ENCODE measurements at regions of chr6 and their contacts with region 1.

Region 1: GRCh38 chr6:136792410-136793262 is at the start of gene MAP3K5:
- DNase-seq: peak; percentile 95
- H3K4me3 Mint-ChIP-seq: peak within 1 kb of the TSS; percentile 93
- H3K27ac Mint-ChIP-seq: peak within 1 kb of the TSS; percentile 91
- H3K4me1 Mint-ChIP-seq: peaks cover 31% of the 10 kb centered on the region
- H3K27me3 Mint-ChIP-seq: peaks cover 3% of the 10 kb centered on the region
- total RNA-seq, gene MAP3K5: 25.4 to 25.9 TPM

Region 2: GRCh38 chr6:136593748-136594490 is 198.7 kb before region 1 on chr6:
- CTCF ChIA-PET with region 1: interaction called, 23 read pairs
- POLR2A ChIA-PET with region 1: interaction called, 28 read pairs
- DNase-seq: peak; percentile 68
- H3K4me3 Mint-ChIP-seq: peak overlapping the region; percentile 63
- H3K27ac Mint-ChIP-seq: peak overlapping the region; percentile 88
- H3K4me1 Mint-ChIP-seq: peaks cover 30% of the 10 kb centered on the region
- H3K27me3 Mint-ChIP-seq: no peaks in the 10 kb centered on the region

Region 3: DNA sequence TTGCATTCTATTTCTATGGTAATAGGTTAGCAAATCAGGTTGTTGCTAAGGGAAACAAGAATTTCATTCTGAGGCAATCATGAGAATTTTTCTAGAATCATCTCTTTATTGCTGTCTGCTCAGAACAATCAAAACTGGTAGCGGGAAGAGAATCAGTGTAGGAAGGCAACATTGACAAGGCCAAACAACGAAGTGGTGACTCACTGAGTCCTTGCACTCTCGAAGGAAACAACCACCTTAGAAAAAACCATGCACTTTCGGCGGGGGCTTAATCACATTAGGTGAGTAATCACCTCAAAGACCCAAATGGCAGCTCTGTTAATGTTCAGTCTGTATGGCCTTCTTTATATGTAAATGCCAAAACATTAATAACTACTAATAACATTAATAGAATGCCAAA is 163.6 kb before region 1 on chr6:
- CTCF ChIA-PET with region 1: interaction called, 11 read pairs
- POLR2A ChIA-PET with region 1: interaction called, 8 read pairs
- DNase-seq: no peak
- H3K4me3 Mint-ChIP-seq: no peak overlapping the region
- H3K27ac Mint-ChIP-seq: no peak overlapping the region
- H3K4me1 Mint-ChIP-seq: peaks cover 11% of the 10 kb centered on the region
- H3K27me3 Mint-ChIP-seq: no peaks in the 10 kb centered on the region

Region 4: GRCh38 chr6:136677831-136678230 is 114.8 kb before region 1 on chr6:
- CTCF ChIA-PET with region 1: interaction called, 13 read pairs
- POLR2A ChIA-PET with region 1: no interaction called
- DNase-seq: no peak
- H3K4me3 Mint-ChIP-seq: no peak overlapping the region
- H3K27ac Mint-ChIP-seq: no peak overlapping the region
- H3K4me1 Mint-ChIP-seq: no peaks in the 10 kb centered on the region
- H3K27me3 Mint-ChIP-seq: no peaks in the 10 kb centered on the region

Region 5: DNA sequence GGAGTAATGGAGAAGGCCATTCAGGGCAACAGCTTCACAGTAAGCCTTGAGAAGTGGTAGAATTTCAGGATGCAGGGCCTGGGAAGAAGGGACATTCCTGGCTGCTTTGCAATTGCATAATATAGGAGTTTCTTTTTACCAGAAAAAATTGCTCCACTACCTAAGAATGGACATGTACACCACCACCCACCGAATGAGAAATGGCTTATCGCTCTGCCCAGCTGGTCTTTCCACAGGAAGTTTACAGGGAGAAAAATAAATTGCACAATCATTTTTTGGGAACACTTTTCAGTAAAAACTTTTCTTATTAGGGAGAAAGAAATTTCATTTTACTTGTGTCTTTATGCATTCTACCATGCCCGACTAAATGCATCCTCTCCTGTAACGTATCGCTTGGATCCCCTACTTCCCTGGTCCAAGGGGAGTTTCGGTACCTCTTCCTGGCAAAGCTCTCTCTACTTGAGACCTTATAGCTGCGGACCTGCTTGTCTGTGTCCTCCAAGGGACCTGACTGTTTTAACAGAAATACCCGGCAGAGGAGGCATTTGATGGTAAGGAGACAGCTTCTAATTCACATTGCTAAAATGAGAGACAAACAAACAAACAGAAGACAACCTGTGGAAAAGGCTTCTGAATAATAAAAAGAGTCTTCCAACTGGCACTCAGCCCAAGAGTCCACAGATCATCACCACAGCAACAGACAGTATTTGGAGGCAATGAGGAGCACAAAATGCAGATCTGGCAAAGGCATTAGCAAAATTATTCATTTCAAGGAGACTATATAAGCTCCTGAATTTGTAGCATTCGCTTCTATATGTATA is 54.6 kb before region 1 on chr6:
- CTCF ChIA-PET with region 1: interaction called, 15 read pairs
- POLR2A ChIA-PET with region 1: interaction called, 24 read pairs
- DNase-seq: no peak
- H3K4me3 Mint-ChIP-seq: no peak overlapping the region
- H3K27ac Mint-ChIP-seq: no peak overlapping the region
- H3K4me1 Mint-ChIP-seq: peaks cover 18% of the 10 kb centered on the region
- H3K27me3 Mint-ChIP-seq: no peaks in the 10 kb centered on the region

Region 6: DNA sequence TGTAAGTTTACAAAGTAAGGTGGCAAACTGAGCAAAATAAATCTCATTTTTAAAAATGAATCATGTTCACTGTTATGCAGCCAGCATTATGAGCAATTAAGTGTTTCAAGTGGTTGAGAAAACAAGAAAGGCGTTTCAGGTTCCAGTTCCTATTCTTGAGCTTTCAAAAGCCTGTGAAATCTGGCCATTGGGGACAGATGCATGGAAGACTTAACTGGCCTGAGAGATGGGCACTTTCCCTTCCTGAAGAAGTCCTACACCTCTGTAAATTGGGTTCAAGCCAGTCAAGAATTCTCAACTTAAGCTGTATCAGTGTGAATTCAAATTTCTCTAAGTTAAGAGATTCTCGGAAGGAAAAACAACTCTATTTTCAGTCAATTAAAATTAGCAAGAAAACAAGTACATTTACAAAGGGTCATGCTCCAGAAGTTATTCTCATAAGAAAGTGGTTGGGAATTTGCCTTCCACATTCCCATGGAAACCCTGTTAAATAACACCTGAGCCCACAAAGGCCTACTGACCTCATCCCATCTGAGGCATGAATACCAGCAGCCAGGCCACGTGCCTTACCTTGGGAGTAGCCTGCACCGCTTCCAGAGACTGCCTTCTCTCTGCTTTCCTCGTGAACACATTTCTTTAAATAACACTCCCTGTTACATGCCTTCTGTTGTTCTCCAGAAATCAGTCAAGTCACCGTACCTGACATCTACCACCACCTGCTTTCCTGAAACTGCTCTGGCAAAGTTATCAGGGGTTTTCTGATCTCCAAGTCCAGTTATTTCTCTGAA is 19.8 kb before region 1 on chr6:
- CTCF ChIA-PET with region 1: interaction called, 11 read pairs
- POLR2A ChIA-PET with region 1: interaction called, 6 read pairs
- DNase-seq: no peak
- H3K4me3 Mint-ChIP-seq: no peak overlapping the region
- H3K27ac Mint-ChIP-seq: no peak overlapping the region
- H3K4me1 Mint-ChIP-seq: peaks cover 49% of the 10 kb centered on the region
- H3K27me3 Mint-ChIP-seq: no peaks in the 10 kb centered on the region

Region 7: DNA sequence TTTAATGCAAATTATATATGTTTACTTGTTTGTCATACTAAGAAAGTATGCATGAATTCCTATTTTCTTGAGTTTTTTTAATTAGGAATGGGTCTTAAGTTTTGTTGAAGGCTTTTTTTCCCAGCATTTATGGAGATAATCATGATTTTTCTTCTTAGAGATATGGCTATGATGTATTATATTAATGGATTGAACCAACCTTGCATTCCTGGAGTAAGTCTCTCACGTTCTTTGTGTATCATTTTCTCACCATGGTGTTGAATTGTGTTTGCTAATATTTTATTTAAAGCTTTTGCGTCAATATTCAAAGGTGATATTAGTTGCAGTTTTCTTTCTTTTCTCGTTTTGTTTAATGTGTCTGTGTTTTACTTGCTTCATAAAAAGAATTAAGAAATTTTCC is 81.1 kb after region 1 on chr6:
- CTCF ChIA-PET with region 1: no interaction called
- POLR2A ChIA-PET with region 1: no interaction called
- DNase-seq: no peak
- H3K4me3 Mint-ChIP-seq: no peak overlapping the region
- H3K27ac Mint-ChIP-seq: no peak overlapping the region
- H3K4me1 Mint-ChIP-seq: no peaks in the 10 kb centered on the region
- H3K27me3 Mint-ChIP-seq: no peaks in the 10 kb centered on the region

Region 8: GRCh38 chr6:136989571-136990241 is 197.1 kb after region 1 on chr6:
- CTCF ChIA-PET with region 1: no interaction called
- POLR2A ChIA-PET with region 1: no interaction called
- DNase-seq: no peak
- H3K4me3 Mint-ChIP-seq: no peak overlapping the region
- H3K27ac Mint-ChIP-seq: no peak overlapping the region
- H3K4me1 Mint-ChIP-seq: peaks cover 8% of the 10 kb centered on the region
- H3K27me3 Mint-ChIP-seq: peaks cover 68% of the 10 kb centered on the region